Naive thymus-derived CD4-positive, alpha-beta T cell (primary cell): ENCODE measurements at regions of chr2 and their contacts with region 1.

Region 1: GRCh38 chr2:71530641-71531332 is 77.4 kb downstream of the DYSF start:
- DNase-seq: no peak
- ATAC-seq: peak; percentile 54
- H3K4me3 ChIP-seq: no peak overlapping the region
- H3K4me3 Mint-ChIP-seq: no peak overlapping the region
- H3K27ac ChIP-seq: no peak overlapping the region
- H3K27ac Mint-ChIP-seq: no peak overlapping the region
- H3K4me1 ChIP-seq: no peaks in the 10 kb centered on the region
- H3K4me1 Mint-ChIP-seq: peaks cover 0 to 5% (median 0%) of the 10 kb centered on the region in 7 donors
- H3K27me3 ChIP-seq: no peaks in the 10 kb centered on the region
- H3K27me3 Mint-ChIP-seq: peaks cover 8 to 66% (median 42%) of the 10 kb centered on the region in 5 donors

Region 2: GRCh38 chr2:71157124-71157793 is 373.5 kb before region 1 on chr2:
- CTCF ChIA-PET with region 1: no interaction called
- POLR2A ChIA-PET with region 1: no interaction called
- intact Hi-C with region 1: no loop called
- DNase-seq: peak; percentile 16 to 53 (median 47)
- ATAC-seq: peak; percentile 83
- H3K4me3 ChIP-seq: no peak overlapping the region
- H3K4me3 Mint-ChIP-seq: peak overlapping the region in 2 of 10 donors; percentile 47 to 65
- H3K27ac ChIP-seq: no peak overlapping the region
- H3K27ac Mint-ChIP-seq: peak overlapping the region in 1 of 9 donors; percentile 63
- H3K4me1 ChIP-seq: no peaks in the 10 kb centered on the region
- H3K4me1 Mint-ChIP-seq: peaks cover 5 to 10% (median 7%) of the 10 kb centered on the region in 7 donors
- H3K27me3 ChIP-seq: no peaks in the 10 kb centered on the region
- H3K27me3 Mint-ChIP-seq: peaks cover 0 to 6% (median 4%) of the 10 kb centered on the region in 5 donors

Region 3: DNA sequence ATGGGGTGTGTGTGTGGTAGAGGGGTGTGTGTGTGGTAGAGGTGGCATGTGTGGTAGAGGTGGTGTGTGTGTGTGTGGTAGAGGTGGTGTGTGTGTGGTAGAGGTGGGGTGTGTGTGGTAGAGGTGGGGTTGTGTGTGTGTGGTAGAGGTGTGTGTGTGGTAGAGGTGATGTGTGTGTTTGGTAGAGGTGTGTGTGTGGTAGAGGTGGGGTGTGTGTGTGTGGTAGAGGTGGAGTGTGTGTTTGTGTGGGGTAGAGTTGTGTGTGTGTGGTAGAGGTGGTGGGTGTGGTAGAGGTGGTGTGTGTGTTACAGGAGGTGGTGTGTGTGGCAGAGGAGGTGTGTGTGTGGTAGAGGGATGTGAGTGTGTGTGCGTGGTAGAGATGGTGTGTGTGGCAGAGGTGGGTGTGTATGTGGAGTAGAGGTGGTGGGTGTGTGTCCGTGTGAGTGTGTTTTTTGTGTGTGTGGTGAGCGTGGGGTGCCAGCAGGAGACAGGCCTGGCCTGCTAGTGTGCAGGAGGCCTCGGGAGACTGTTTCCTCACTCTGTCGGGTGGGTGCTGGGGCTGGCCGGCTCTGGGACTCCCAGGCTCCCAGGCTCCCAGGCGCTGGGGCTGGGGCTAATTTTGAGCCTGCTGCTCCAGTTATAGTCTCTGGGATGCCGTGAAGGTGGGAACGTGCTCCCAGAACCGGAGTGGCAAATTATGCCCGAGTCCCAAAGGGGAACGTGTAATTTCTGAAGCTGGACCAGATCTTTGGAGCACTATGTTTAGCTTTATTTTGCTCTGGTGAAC is 87.7 kb after region 1 on chr2:
- CTCF ChIA-PET with region 1: no interaction called
- POLR2A ChIA-PET with region 1: no interaction called
- intact Hi-C with region 1: no loop called
- DNase-seq: no peak
- ATAC-seq: peak; percentile 12
- H3K4me3 ChIP-seq: no peak overlapping the region
- H3K4me3 Mint-ChIP-seq: no peak overlapping the region
- H3K27ac ChIP-seq: no peak overlapping the region
- H3K27ac Mint-ChIP-seq: no peak overlapping the region
- H3K4me1 ChIP-seq: no peaks in the 10 kb centered on the region
- H3K4me1 Mint-ChIP-seq: no peaks in the 10 kb centered on the region
- H3K27me3 ChIP-seq: no peaks in the 10 kb centered on the region
- H3K27me3 Mint-ChIP-seq: peaks cover 0 to 19% (median 15%) of the 10 kb centered on the region in 5 donors

Region 4: DNA sequence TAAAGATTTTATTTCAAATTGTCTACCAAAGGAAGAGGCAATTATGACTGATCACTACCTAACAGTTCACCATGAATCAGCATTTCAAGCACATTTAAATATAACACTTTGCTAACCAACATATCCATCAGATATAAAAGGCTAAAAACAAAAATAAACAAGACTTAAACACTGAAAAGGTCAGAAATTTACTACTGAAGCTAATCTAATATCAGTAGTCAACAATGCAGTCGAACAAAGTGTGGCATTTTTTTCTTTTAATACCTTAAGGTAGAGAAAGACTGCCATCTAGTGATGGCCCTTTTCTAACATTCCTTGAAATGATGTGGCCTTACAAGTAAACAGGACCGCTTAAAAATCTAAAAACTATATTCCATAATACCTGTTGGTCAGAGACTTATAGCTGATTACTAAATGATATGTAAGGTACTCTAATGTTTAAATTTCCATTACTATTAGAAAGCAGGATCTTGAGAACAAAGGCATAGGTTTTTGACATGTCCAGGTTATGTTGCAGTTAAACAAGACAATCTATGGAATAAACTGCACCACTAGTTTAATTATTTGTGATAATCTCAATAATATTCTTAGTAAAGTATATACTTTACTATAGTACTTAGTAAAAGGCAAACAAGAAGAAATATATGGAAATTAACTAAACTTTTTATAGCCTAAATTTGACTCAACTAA is 1215.0 kb after region 1 on chr2:
- CTCF ChIA-PET with region 1: no interaction called
- POLR2A ChIA-PET with region 1: no interaction called
- intact Hi-C with region 1: loop called in 1 of 2 experiments (anchors 5 kb)
- DNase-seq: peak in 5 of 9 donors; percentile 14 to 39 (median 26)
- ATAC-seq: no peak
- H3K4me3 ChIP-seq: no peak overlapping the region
- H3K4me3 Mint-ChIP-seq: no peak overlapping the region
- H3K27ac ChIP-seq: no peak overlapping the region
- H3K27ac Mint-ChIP-seq: no peak overlapping the region
- H3K4me1 ChIP-seq: no peaks in the 10 kb centered on the region
- H3K4me1 Mint-ChIP-seq: no peaks in the 10 kb centered on the region
- H3K27me3 ChIP-seq: no peaks in the 10 kb centered on the region
- H3K27me3 Mint-ChIP-seq: no peaks in the 10 kb centered on the region